Activated CD4-positive, alpha-beta memory T cell treated with anti-CD3 and anti-CD28 coated beads for 36 hours (primary cell): ENCODE measurements at regions of chr5 and their contacts with region 1.

Region 1: DNA sequence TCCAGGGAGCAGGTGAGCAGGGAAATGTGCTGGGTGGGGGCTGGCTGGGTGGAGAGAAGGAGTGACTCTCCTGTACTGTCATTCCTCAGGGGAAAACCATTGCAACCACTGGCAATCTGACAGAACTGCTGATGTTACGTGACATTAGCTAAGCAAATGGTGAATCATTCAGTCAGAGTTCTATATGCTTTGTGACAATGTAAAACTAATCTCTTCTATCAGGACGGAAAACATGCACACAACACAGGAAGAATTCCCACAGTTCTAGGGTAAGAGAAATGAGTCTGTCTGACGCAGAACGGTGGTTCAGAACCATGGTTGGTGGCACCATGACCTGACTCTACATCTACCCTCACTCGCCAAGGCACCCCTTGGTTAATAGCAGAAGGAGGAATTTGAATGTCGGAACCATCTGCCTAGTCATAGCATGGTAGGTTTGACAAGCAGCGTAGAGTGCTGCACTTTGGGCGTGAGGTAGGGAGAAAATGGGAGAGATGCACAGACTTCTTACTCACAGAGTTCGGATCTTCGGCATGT is 243.6 kb upstream of the PANK3 start:
- DNase-seq: peak; percentile 58
- H3K4me3 Mint-ChIP-seq: peak overlapping the region; percentile 20
- H3K27ac Mint-ChIP-seq: peak overlapping the region; percentile 80
- H3K4me1 Mint-ChIP-seq: peaks cover 17% of the 10 kb centered on the region
- H3K27me3 Mint-ChIP-seq: peaks cover 5% of the 10 kb centered on the region

Region 2: GRCh38 chr5:168698991-168699401 is 123.8 kb before region 1 on chr5:
- CTCF ChIA-PET with region 1: no interaction called
- POLR2A ChIA-PET with region 1: no interaction called
- intact Hi-C with region 1: no loop called
- DNase-seq: no peak
- H3K4me3 Mint-ChIP-seq: no peak overlapping the region
- H3K27ac Mint-ChIP-seq: no peak overlapping the region
- H3K4me1 Mint-ChIP-seq: no peaks in the 10 kb centered on the region
- H3K27me3 Mint-ChIP-seq: peaks cover 3% of the 10 kb centered on the region

Region 3: GRCh38 chr5:168793841-168794837 is 28.7 kb before region 1 on chr5:
- CTCF ChIA-PET with region 1: no interaction called
- POLR2A ChIA-PET with region 1: interaction called, 4 read pairs
- intact Hi-C with region 1: loop called (anchors 1 kb)
- DNase-seq: peak; percentile 67
- H3K4me3 Mint-ChIP-seq: no peak overlapping the region
- H3K27ac Mint-ChIP-seq: peak overlapping the region; percentile 69
- H3K4me1 Mint-ChIP-seq: peaks cover 34% of the 10 kb centered on the region
- H3K27me3 Mint-ChIP-seq: peaks cover 10% of the 10 kb centered on the region

Region 4: GRCh38 chr5:168802337-168802736 is 20.5 kb before region 1 on chr5:
- CTCF ChIA-PET with region 1: interaction called, 3 read pairs
- POLR2A ChIA-PET with region 1: interaction called, 8 read pairs
- intact Hi-C with region 1: loop called (anchors 1 kb)
- DNase-seq: peak; percentile 60
- H3K4me3 Mint-ChIP-seq: peak overlapping the region; percentile 45
- H3K27ac Mint-ChIP-seq: peak overlapping the region; percentile 81
- H3K4me1 Mint-ChIP-seq: peaks cover 32% of the 10 kb centered on the region
- H3K27me3 Mint-ChIP-seq: peaks cover 13% of the 10 kb centered on the region

Region 5: DNA sequence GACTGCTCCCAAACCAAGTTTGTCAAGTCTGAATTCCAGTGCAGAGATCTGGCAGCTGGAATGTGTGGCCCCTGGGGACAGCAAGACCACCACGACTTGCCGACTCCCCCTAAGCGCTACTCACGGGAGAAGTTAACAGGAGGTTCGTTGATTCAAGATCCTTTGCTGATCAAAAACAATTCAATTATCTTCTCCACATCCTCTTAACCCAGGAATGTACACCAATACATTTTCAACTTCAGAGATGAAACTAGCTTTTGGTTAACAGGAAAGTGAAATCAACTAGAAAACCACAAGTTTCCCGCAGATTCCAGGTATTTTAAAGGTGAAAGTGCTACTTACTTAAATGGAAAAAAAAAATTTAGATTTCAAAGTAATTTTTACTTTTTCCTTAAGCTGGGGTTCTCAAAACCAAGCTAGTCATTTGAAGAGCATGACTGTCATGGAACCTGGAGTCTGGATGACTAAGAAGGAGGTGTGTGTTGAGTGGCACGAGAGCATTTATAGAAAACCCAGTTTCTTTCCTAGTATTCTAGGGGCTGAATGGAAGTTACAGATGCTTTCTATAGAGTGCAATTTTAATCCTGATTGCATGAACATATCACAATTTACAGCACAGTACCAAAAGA is 13.9 kb after region 1 on chr5:
- CTCF ChIA-PET with region 1: interaction called, 3 read pairs
- POLR2A ChIA-PET with region 1: interaction called, 11 read pairs
- intact Hi-C with region 1: loop called (anchors 1 kb)
- DNase-seq: peak; percentile 27
- H3K4me3 Mint-ChIP-seq: peak overlapping the region; percentile 64
- H3K27ac Mint-ChIP-seq: peak overlapping the region; percentile 84
- H3K4me1 Mint-ChIP-seq: peaks cover 27% of the 10 kb centered on the region
- H3K27me3 Mint-ChIP-seq: peaks cover 16% of the 10 kb centered on the region

Region 6: DNA sequence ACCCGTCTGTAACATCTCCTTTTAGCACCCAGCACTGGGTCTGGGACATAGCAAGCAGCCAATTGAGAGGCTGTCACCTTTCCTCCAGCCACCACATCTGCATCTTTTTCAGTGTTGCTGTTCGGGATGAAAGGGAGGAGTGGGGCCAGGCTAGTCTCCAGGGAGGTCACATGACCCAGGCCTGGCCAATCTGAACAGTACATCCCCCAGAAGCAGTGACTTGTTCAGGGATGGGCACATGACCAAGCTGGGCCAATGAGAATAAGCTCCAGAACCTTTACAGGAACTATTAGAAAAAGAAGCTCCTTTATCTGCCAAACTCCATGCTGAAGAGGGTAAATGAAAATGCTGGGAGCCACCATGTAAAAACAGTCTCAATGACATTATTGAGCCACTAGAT is 119.1 kb after region 1 on chr5:
- CTCF ChIA-PET with region 1: no interaction called
- POLR2A ChIA-PET with region 1: no interaction called
- intact Hi-C with region 1: loop called (anchors 5 kb)
- DNase-seq: no peak
- H3K4me3 Mint-ChIP-seq: no peak overlapping the region
- H3K27ac Mint-ChIP-seq: no peak overlapping the region
- H3K4me1 Mint-ChIP-seq: peaks cover 5% of the 10 kb centered on the region
- H3K27me3 Mint-ChIP-seq: peaks cover 4% of the 10 kb centered on the region